OCI-LY7 (cell line): ENCODE measurements at regions of chr12 and their contacts with region 1.

Region 1: DNA sequence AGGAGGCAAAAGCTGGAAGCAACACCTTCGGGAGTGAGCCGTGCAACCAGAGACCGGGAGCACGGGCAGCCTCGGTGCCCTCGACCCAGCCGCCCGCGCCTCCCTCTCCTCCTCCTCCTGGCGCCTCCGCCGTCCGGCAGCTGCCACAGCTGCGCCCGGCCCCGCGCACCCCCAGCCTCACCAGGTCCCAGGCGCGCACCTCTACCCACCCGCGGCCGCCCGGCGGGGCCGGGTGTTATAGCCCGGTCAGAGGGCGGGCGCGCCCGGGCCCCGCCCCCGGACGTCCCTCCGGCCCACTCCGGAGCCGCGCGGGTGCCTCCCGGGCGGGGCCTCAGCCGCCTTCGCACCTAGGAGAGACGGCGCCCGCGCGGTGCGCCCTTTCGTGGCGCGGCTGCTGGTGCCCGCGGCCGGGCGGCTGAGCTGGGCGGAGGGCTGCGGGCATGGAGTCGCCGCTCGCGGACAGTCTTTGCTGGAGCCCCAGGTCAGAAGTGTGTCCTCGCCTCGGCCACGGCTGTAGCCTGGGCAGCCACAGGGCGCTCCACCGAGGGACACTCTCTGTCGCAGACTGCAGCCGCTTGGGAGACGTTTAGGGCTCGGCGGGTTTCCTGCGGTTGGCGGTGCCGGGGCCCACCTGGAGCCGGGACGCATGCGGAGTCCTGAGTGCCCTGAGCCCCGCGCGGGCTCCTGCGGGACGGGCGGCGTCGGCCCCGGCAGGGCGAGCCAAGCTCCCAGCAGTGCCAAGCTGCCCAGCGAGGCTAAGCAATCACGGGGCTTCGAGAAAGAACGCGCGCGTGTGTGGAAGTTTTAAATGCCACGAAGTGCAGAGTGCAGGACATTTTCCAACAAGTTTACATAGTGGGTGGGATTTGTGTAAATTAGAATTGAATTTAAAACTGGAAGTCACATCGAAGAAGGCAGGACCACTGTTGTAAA is at the start of gene CPM:
- DNase-seq: peak; percentile 58
- H3K4me3 ChIP-seq: peak within 1 kb of the TSS; percentile 72
- H3K27ac ChIP-seq: peak within 1 kb of the TSS; percentile 7
- H3K4me1 ChIP-seq: peaks cover 28% of the 10 kb centered on the region
- CTCF ChIP-seq: no peak
- total RNA-seq, gene CPM: 3.8 and 4.8 TPM in 2 replicates

Region 2: GRCh38 chr12:68889647-68890121 is 43.5 kb before region 1 on chr12:
- CTCF ChIA-PET with region 1: no interaction called
- POLR2A ChIA-PET with region 1: no interaction called
- intact Hi-C with region 1: loop called (anchors 5 kb)
- DNase-seq: peak; percentile 96
- H3K4me3 ChIP-seq: peak overlapping the region; percentile 32
- H3K27ac ChIP-seq: peak overlapping the region; percentile 89
- H3K4me1 ChIP-seq: peaks cover 84% of the 10 kb centered on the region
- CTCF ChIP-seq: no peak